ENCODE measurements at regions of chr15 and their contacts with region 1.

Region 1: GRCh38 chr15:76973362-76973743 is 21.6 kb upstream of the PSTPIP1 start:
- DNase-seq: peak; percentile 56
- H3K4me3 ChIP-seq: no peak overlapping the region
- H3K27ac ChIP-seq: no peak overlapping the region
- H3K4me1 ChIP-seq: peaks cover 11% of the 10 kb centered on the region
- H3K27me3 ChIP-seq: peaks cover 0 to 2% of the 10 kb centered on the region in 2 experiments
- CTCF ChIP-seq: peak; percentile 78
- POLR2A ChIP-seq: no peak

Region 2: GRCh38 chr15:76983590-76984375 is 10.4 kb after region 1 on chr15:
- CTCF ChIA-PET with region 1: interaction called, 25 read pairs
- POLR2A ChIA-PET with region 1: no interaction called
- dilution Hi-C with region 1: no loop called
- intact Hi-C with region 1: no loop called
- DNase-seq: no peak
- H3K4me3 ChIP-seq: no peak overlapping the region
- H3K27ac ChIP-seq: no peak overlapping the region
- H3K4me1 ChIP-seq: no peaks in the 10 kb centered on the region
- H3K27me3 ChIP-seq: no peaks in the 10 kb centered on the region
- CTCF ChIP-seq: no peak
- POLR2A ChIP-seq: no peak

Region 3: DNA sequence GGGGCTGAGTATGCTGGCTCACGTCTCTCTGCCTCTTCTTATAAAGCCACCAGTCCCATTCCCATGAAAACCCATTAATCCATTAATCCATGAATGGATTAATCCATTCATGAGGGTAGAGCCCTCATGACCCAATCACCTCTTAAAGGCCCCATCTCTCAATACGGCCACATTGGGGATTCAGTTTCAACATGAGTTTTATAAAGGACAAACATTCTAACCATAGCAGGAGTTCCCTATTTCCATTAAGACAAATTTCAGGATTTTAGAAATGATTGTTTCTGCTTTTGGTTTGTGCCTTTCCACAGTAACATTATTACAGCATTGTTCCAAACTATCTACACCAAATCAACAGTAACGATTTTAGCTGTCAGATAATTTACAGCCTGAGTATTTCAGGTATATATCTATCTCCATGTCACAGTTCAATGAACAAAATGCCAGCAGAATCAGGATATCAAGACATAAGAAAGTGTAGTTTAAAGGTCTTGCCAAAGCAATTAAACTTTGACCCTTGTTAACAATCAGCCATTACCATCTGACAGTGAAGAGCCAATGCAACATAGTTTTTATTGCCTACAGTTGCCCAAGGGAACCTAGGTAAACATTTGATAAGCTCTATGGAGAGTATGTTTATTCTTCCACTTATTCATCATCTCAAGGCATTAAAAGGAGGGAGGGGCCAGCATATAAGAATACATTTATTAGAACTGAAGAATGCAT is 93.8 kb after region 1 on chr15:
- CTCF ChIA-PET with region 1: no interaction called
- POLR2A ChIA-PET with region 1: no interaction called
- dilution Hi-C with region 1: no loop called
- intact Hi-C with region 1: no loop called
- DNase-seq: peak; percentile 84
- H3K4me3 ChIP-seq: no peak overlapping the region
- H3K27ac ChIP-seq: peak overlapping the region; percentile 51
- H3K4me1 ChIP-seq: peaks cover 55% of the 10 kb centered on the region
- H3K27me3 ChIP-seq: no peaks in the 10 kb centered on the region
- CTCF ChIP-seq: no peak
- POLR2A ChIP-seq: no peak

Region 4: DNA sequence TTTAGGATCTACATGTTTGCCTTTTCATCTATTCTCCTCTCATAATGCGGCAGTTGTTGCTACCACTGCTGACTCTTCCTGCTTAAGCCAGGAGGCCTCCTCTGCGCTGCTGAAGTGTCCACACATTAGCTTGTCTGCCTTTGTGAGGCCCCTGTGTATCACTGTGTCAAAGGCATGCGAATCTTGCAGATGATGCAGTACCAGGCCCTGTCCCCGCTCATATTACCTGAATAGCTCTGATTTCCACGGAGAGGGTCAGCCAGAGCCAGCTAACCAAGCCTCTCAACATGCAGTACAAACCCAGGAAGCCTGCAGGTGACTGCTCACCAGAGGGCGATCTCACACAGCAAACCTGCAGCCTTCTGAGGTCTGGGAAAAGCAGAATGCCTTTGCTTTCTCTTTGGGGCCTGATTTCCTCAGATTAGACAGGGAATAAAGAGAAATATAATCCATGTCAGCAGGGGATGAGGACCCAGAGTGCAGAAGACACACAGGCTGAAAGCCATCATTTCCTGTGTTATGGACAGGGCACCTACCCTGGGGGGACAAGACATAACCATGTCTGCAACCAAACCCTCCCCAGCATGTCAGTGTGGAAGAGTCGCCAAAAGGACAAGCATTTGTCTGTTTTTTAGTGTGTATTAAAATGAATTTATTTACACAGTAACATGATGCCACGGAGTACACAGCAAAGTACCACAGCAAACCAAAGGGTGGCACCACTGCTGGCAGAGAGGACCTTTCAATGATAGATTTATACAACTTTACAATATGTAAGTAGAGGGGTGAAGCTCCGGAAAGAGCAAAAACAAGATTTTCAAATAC is 134.4 kb after region 1 on chr15:
- CTCF ChIA-PET with region 1: interaction called, 5 read pairs
- POLR2A ChIA-PET with region 1: no interaction called
- dilution Hi-C with region 1: no loop called
- intact Hi-C with region 1: loop called (anchors 10 kb)
- DNase-seq: peak; percentile 53
- H3K4me3 ChIP-seq: no peak overlapping the region
- H3K27ac ChIP-seq: no peak overlapping the region
- H3K4me1 ChIP-seq: peaks cover 3% of the 10 kb centered on the region
- H3K27me3 ChIP-seq: no peaks in the 10 kb centered on the region
- CTCF ChIP-seq: peak; percentile 61 to 78
- POLR2A ChIP-seq: no peak

Region 5: DNA sequence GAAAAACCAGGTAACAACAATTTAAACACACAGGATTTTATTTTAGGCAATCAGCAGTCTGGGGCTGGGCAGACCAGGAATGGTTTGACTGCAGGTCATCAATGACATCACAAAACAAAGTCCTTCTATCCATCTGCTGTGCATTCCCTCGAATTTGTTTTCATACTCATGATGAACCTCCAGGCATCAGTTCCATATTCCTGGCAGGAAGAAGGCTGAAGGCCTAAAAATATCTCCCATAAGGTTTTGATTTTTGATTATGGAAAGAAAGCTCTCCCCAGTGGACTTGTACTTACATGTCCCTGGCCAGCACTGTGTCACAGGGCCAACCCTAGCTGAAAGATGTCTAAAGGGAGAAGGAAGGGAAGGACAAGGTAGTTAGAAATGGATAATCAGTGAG is 339.2 kb after region 1 on chr15:
- CTCF ChIA-PET with region 1: no interaction called
- POLR2A ChIA-PET with region 1: no interaction called
- dilution Hi-C with region 1: no loop called
- intact Hi-C with region 1: no loop called
- DNase-seq: no peak
- H3K4me3 ChIP-seq: no peak overlapping the region
- H3K27ac ChIP-seq: no peak overlapping the region
- H3K4me1 ChIP-seq: no peaks in the 10 kb centered on the region
- H3K27me3 ChIP-seq: no peaks in the 10 kb centered on the region
- CTCF ChIP-seq: no peak
- POLR2A ChIP-seq: no peak